Activated CD8-positive, alpha-beta T cell treated with anti-CD3 and anti-CD28 coated beads for 36 hours (primary cell): ENCODE measurements at regions of chr17 and their contacts with region 1.

Region 1: GRCh38 chr17:41824086-41824485 is 11.3 kb downstream of the FKBP10 start:
- DNase-seq: no peak
- ATAC-seq: no peak
- H3K4me3 Mint-ChIP-seq: no peak overlapping the region
- H3K27ac Mint-ChIP-seq: no peak overlapping the region
- H3K4me1 Mint-ChIP-seq: no peaks in the 10 kb centered on the region
- H3K27me3 Mint-ChIP-seq: no peaks in the 10 kb centered on the region
- CTCF ChIP-seq: no peak

Region 2: DNA sequence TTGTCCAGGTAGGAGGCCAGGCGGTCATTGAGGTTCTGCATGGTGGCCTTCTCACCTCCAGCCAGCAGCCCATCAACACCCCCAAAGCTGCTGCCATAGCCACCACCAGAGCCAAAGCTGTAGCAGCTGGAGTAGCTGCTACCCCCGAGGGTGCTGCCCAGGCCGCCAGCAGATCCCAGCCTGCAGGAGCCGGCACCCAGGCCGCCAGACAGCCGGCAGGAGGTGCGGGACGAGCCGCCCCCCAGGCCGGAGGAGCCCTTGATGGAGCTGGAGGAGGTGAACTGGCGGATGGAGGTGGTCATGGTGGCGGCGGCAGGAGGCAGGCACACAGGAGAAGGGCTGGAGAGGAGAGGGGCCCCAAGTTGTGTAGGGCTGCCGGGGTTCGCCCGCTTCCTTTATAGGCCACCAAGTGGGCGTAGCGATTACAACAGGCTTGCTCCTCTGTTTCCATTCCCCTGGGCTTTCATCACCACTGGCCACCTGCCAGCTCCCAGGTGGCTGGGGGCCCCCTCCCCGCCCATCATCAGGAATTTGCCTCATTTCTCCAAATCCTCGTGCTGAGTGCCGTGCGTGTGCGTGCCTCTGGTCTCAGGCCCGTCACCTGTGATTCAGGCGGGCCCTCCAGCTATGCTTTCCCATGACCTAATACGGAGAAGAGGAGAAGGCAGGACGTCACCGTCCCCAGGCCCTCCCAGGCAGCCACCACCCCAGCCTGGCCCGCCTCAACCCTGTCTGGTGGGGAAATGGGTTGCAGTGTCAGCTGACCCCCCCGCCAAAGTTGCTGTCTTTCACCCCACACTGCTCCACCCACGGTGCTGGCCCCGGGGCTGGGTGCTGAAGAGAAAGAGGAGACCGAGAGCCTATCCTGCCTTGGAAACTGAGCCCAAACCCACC is 199.6 kb before region 1 on chr17 and contains the start of gene KRT17:
- CTCF ChIA-PET with region 1: no interaction called
- POLR2A ChIA-PET with region 1: no interaction called
- intact Hi-C with region 1: no loop called
- DNase-seq: no peak
- ATAC-seq: no peak
- H3K4me3 Mint-ChIP-seq: no peak within 1 kb of the TSS
- H3K27ac Mint-ChIP-seq: no peak within 1 kb of the TSS
- H3K4me1 Mint-ChIP-seq: no peaks in the 10 kb centered on the region
- H3K27me3 Mint-ChIP-seq: no peaks in the 10 kb centered on the region
- CTCF ChIP-seq: no peak
- total RNA-seq, gene KRT17: not detected

Region 3: GRCh38 chr17:41738077-41738735 is 85.9 kb before region 1 on chr17:
- CTCF ChIA-PET with region 1: no interaction called
- POLR2A ChIA-PET with region 1: no interaction called
- intact Hi-C with region 1: no loop called
- DNase-seq: peak; percentile 90
- ATAC-seq: peak; percentile 95
- H3K4me3 Mint-ChIP-seq: no peak overlapping the region
- H3K27ac Mint-ChIP-seq: peak overlapping the region; percentile 38
- H3K4me1 Mint-ChIP-seq: peaks cover 10% of the 10 kb centered on the region
- H3K27me3 Mint-ChIP-seq: peaks cover 32% of the 10 kb centered on the region
- CTCF ChIP-seq: peak; percentile 94

Region 4: GRCh38 chr17:41811549-41812380 is 12.3 kb before region 1 on chr17 and contains the start of gene P3H4:
- CTCF ChIA-PET with region 1: interaction called, 10 read pairs
- POLR2A ChIA-PET with region 1: interaction called, 5 read pairs
- intact Hi-C with region 1: no loop called
- DNase-seq: peak; percentile 78
- ATAC-seq: peak; percentile 86
- H3K4me3 Mint-ChIP-seq: peak within 1 kb of the TSS; percentile 79
- H3K27ac Mint-ChIP-seq: peak within 1 kb of the TSS; percentile 63
- H3K4me1 Mint-ChIP-seq: peaks cover 21% of the 10 kb centered on the region
- H3K27me3 Mint-ChIP-seq: peaks cover 7% of the 10 kb centered on the region
- CTCF ChIP-seq: peak; percentile 67
- total RNA-seq, gene P3H4: 2.6 to 3.2 TPM

Region 5: DNA sequence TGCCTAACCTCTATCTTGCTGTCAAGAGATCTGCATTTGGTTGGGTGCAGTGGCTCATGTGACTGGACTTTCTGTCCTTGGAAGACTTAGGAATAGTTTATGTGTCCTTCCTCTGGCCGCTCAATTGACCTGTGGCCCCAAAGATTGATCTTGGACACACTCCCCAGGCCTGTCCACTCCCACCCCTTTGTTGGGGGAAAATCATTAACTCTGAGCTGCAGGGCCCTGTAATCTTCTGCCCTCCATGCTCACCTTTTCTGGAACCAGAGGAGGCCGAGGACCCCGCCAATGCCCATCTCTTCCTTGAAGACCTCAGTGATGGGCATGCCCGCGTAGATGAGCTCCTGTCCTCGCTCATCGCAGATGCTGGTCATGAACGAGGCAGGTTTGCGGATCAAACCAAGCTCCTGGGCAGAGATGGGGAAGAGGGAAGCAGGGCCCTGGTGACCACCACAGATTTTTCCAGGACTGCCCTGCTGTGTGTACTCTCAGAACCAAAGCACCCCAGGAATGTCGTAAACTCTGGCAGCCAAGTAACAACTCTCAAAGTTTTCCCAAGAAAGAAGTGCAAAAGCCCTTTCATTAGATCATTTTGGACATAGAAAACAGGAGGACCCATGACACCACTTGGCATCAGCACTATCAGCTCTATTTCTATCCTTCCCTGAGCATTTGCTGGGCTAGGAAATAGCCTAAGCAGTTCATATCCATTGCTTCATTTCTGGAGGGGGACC is 49.6 kb after region 1 on chr17:
- CTCF ChIA-PET with region 1: no interaction called
- POLR2A ChIA-PET with region 1: no interaction called
- intact Hi-C with region 1: no loop called
- DNase-seq: no peak
- ATAC-seq: no peak
- H3K4me3 Mint-ChIP-seq: no peak overlapping the region
- H3K27ac Mint-ChIP-seq: no peak overlapping the region
- H3K4me1 Mint-ChIP-seq: peaks cover 18% of the 10 kb centered on the region
- H3K27me3 Mint-ChIP-seq: no peaks in the 10 kb centered on the region
- CTCF ChIP-seq: no peak